ENCODE measurements at regions of chr7 and their contacts with region 1.

Region 1: DNA sequence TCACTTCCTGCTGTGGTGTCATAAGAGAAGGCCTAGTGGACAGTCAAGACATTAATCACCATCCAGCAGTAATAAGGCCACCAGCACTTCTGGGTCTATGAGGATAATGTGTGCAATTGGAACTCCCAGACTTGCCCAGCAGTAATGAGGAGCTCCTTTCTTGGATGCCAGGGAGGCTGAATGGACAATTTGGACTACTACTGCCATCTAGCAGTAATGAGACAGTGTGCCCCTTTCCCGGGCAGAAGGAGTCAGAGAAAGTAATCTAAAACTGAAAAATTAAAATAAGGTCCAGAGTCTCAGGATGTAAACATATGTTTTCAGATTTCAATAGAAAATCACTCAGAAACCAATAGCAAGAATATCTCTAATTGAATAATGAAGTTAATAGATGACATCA is 400.4 kb downstream of the CDC14C start:
- DNase-seq: peak; percentile 47
- H3K4me3 Mint-ChIP-seq: no peak overlapping the region
- H3K27ac Mint-ChIP-seq: no peak overlapping the region
- H3K4me1 Mint-ChIP-seq: no peaks in the 10 kb centered on the region
- H3K27me3 Mint-ChIP-seq: peaks cover 58% of the 10 kb centered on the region
- CTCF ChIP-seq: peak; percentile 39

Region 2: GRCh38 chr7:48424731-48425130 is 900.0 kb before region 1 on chr7:
- CTCF ChIA-PET with region 1: interaction called, 5 read pairs
- POLR2A ChIA-PET with region 1: no interaction called
- intact Hi-C with region 1: loop called (anchors 10 kb)
- DNase-seq: peak; percentile 53
- H3K4me3 Mint-ChIP-seq: no peak overlapping the region
- H3K27ac Mint-ChIP-seq: no peak overlapping the region
- H3K4me1 Mint-ChIP-seq: peaks cover 39% of the 10 kb centered on the region
- H3K27me3 Mint-ChIP-seq: no peaks in the 10 kb centered on the region
- CTCF ChIP-seq: peak; percentile 80

Region 3: DNA sequence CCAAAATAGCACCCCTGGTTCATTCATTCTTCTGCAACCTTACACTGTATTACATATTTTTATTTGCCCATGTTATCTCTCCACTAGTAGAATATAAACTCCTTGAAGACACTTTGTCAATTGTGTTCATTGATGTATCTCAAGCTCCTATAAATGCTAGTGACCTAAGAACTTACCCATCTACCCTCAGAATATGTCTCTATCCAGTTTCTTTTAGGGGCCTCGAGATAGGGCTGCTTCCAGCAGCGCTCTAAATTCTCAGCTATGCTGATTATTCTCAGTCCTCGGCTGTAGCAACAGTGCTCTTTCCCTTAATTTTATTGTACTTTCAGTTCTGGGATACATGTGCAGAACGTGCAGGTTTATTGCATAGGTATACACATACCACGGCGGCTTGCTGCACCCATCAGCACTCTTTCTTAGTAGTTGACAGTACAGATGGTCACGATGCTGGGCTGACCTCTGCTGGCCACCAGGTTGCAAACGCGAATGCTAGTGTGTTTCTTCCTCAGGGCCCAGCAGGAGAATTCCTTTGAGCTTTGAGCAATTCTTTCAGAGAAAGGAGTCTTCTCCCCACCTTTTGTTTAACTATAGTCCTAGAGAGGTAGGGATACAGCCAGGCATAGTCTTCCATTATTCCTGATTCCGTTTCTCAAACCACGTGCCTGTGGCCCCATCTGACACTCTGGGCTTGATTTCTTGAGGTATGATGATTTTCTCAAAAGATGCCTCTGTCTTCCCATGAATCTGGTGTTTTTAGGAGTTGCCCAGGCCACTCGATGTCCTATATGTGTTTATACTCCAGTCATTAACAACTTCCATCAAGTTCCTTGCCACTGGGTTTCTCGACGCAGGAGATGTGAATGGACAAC is 449.4 kb before region 1 on chr7:
- CTCF ChIA-PET with region 1: interaction called, 3 read pairs
- POLR2A ChIA-PET with region 1: no interaction called
- intact Hi-C with region 1: loop called (anchors 10 kb)
- DNase-seq: peak; percentile 43
- H3K4me3 Mint-ChIP-seq: no peak overlapping the region
- H3K27ac Mint-ChIP-seq: no peak overlapping the region
- H3K4me1 Mint-ChIP-seq: no peaks in the 10 kb centered on the region
- H3K27me3 Mint-ChIP-seq: peaks cover 49% of the 10 kb centered on the region
- CTCF ChIP-seq: peak; percentile 79

Region 4: GRCh38 chr7:49001610-49002033 is 323.1 kb before region 1 on chr7:
- CTCF ChIA-PET with region 1: interaction called, 7 read pairs
- POLR2A ChIA-PET with region 1: no interaction called
- intact Hi-C with region 1: loop called (anchors 1 kb)
- DNase-seq: peak; percentile 64
- H3K4me3 Mint-ChIP-seq: no peak overlapping the region
- H3K27ac Mint-ChIP-seq: no peak overlapping the region
- H3K4me1 Mint-ChIP-seq: no peaks in the 10 kb centered on the region
- H3K27me3 Mint-ChIP-seq: peaks cover 31% of the 10 kb centered on the region
- CTCF ChIP-seq: peak; percentile 56

Region 5: GRCh38 chr7:49099587-49100326 is 224.9 kb before region 1 on chr7:
- CTCF ChIA-PET with region 1: interaction called, 6 read pairs
- POLR2A ChIA-PET with region 1: no interaction called
- intact Hi-C with region 1: loop called (anchors 1 kb)
- DNase-seq: peak; percentile 21
- H3K4me3 Mint-ChIP-seq: no peak overlapping the region
- H3K27ac Mint-ChIP-seq: no peak overlapping the region
- H3K4me1 Mint-ChIP-seq: no peaks in the 10 kb centered on the region
- H3K27me3 Mint-ChIP-seq: peaks cover 41% of the 10 kb centered on the region
- CTCF ChIP-seq: peak; percentile 33

Region 6: DNA sequence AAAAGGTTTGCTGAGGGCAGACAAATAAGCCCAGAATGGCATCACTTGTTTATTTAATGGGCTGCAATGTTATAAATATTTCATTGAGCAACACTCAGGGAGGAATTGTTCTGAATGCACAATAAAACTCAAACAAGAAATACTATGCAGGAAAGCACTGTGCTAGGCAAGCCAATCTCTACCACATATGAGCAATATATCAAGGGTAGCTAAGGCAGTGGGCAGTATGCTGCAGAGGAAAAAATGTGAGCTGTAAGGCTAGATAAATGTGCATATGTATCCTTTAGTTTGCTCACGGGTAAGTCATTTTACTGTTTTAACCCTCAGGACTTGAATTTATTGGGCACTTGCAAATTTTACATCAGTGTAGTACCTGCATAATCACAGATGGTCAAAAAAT is 50.8 kb before region 1 on chr7:
- CTCF ChIA-PET with region 1: interaction called, 5 read pairs
- POLR2A ChIA-PET with region 1: no interaction called
- intact Hi-C with region 1: loop called (anchors 1 kb)
- DNase-seq: no peak
- H3K4me3 Mint-ChIP-seq: no peak overlapping the region
- H3K27ac Mint-ChIP-seq: no peak overlapping the region
- H3K4me1 Mint-ChIP-seq: no peaks in the 10 kb centered on the region
- H3K27me3 Mint-ChIP-seq: peaks cover 79% of the 10 kb centered on the region
- CTCF ChIP-seq: no peak

Region 7: DNA sequence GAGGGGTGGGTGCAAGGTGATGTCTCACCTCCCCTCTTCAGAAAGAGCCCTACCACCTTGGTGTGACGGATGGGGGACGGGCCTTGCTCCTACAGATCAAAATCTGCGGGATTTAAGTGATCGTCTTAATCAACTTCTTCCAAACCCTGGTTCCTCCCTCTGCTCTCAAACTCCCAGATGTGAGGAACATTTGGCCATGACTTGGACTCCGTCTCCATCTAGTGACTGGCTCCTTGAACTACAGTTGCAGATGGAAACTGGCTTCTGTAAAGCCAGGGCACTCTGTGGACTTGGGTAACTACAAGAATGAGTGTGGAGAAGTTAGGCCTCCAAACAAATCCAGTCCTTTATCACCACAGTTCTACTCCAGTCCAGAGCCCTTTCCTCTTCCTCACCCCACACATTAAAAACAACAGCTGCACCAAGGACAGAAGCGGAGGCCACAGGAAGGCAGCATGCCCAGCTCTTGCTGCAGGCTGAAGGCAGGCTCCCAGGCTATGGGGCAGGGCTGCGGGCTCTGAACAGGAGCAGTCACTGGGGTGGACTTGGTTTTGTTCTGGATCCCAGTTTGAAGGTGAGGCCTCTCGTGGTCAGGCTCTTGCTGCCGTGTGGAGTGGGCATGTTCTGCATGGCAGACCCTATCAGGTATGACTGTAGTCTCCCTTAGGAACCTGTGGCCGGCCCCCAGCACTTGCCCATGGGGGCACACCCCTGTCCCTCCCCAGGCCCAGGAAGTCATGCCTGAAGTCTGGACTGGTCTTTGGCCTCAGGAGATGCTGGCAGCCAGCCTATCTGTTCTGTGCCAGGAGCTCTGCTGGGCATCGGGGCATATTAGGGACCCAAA is 528.1 kb after region 1 on chr7:
- CTCF ChIA-PET with region 1: no interaction called
- POLR2A ChIA-PET with region 1: no interaction called
- intact Hi-C with region 1: loop called (anchors 1 kb)
- DNase-seq: peak; percentile 66
- H3K4me3 Mint-ChIP-seq: no peak overlapping the region
- H3K27ac Mint-ChIP-seq: no peak overlapping the region
- H3K4me1 Mint-ChIP-seq: no peaks in the 10 kb centered on the region
- H3K27me3 Mint-ChIP-seq: peaks cover 33% of the 10 kb centered on the region
- CTCF ChIP-seq: peak; percentile 90